PC-9 (cell line): ENCODE measurements at regions of chr12 and their contacts with region 1.

Region 1: DNA sequence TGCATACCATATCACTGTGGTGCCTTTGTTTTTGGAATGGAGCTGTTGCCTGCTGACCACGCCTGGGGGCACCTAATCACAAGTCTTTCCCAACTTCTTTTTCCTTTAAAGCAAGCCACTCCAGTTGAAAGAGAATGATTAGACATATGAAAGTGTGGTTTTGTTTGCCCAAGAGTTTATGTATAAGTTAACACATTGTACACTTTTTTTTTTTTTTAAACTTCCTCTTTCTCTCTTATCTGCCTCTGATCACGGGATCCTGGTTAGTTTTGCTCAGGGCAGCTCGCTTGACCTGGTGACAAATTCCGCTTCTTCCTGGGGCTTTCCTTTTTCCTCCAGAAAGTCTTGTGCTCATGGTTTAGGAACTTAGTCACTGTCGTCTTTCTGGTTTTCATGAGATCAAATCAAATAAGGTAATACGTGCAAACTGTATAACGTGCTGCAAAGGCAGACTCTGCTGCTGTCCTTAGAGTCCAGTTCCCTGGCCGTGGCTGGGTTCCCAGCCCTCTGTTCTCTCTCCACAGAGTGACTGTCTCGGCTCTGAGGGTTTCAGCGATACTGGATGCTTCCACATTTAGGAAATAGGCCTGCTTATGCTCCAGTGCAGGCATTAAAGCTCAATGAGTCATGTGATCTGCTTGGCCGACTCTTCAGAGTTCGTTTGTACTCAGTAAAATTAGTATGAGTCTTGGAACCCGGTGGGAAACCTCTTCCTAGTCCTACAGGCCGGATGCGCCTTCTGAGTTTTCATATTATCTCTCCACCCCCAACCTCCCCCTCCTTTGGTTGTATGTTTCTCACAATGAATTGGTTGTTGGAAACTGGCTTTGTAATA is 15.2 kb downstream of the RASSF3 start:
- DNase-seq: peak; percentile 72 to 99
- H3K4me3 ChIP-seq: peak overlapping the region; percentile 42
- H3K27ac ChIP-seq: peak overlapping the region; percentile 100
- H3K4me1 ChIP-seq: peaks cover 59% of the 10 kb centered on the region
- H3K27me3 ChIP-seq: no peaks in the 10 kb centered on the region
- CTCF ChIP-seq: no peak

Region 2: DNA sequence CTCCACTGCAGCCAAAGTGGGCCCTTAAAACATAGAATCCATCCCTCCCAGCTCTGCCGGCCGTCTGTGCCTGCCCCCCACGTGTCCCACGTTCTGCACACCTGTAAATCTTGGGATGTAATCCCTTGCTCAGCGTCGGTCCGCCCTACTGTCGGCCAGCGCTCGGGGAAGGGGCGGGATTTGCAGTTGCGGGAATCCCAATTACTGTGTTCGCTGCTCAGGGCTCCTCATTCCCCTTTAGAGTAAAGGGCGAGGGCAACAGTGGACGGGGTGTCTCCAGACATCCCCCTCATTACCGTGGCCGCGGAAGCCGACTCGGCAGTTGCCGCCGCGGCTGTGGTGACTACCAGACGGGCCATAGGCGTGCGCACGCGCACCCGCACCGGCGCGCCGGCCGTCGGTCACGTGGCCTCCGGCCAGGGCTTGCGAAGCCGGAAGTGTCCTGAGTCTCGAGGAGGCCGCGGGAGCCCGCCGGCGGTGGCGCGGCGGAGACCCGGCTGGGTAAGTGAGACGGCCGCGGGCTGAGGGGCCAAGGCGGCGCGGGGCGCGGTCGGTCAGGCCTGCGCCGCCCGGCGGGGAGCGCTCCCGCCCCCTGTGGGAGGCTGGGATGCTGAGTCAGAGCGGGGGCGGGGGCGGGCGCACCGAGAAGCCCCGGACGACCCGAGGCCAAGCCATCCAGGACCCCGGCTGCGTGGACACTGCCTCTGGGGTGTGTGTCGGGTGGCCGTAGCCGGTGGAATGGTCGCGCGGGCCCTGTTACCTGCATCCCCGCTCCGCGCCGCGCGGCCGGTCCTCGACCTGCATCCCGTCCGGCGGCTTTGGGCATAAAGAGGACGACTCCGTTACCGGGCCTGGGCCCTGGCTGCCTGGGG is 173.5 kb before region 1 on chr12 and contains the start of gene TBK1:
- CTCF ChIA-PET with region 1: no interaction called
- POLR2A ChIA-PET with region 1: interaction called, 13 read pairs
- intact Hi-C with region 1: no loop called
- DNase-seq: peak; percentile 74 to 90
- H3K4me3 ChIP-seq: peak within 1 kb of the TSS; percentile 69
- H3K27ac ChIP-seq: peak within 1 kb of the TSS; percentile 87
- H3K4me1 ChIP-seq: peaks cover 26% of the 10 kb centered on the region
- H3K27me3 ChIP-seq: no peaks in the 10 kb centered on the region
- CTCF ChIP-seq: no peak
- total RNA-seq, gene TBK1: 18.0 and 26.2 TPM in 2 replicates

Region 3: DNA sequence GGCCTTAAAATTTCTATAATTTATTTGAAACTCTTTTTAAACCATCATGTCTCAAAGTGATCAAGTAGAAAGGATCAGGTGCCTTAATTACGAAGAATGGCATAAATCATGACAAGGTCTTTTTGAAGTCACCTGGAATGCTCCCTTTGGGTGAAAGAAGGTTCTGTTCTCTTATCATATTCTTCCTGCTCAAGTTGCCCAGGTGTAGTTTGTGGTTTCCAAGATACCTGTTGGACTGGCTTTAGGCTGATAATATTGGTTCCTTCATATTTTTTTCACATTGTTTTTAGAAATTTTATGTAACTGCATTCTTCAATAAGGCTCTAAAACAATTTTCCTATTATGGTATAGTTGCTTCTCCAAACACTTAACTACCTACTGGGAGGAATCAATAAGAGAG is 14.0 kb after region 1 on chr12:
- CTCF ChIA-PET with region 1: no interaction called
- POLR2A ChIA-PET with region 1: interaction called, 4 read pairs
- intact Hi-C with region 1: loop called (anchors 1 kb)
- DNase-seq: peak; percentile 23 to 91
- H3K4me3 ChIP-seq: peak overlapping the region; percentile 10; the same call in 1 of the 2 replicates
- H3K27ac ChIP-seq: peak overlapping the region; percentile 92
- H3K4me1 ChIP-seq: peaks cover 50% of the 10 kb centered on the region
- H3K27me3 ChIP-seq: no peaks in the 10 kb centered on the region
- CTCF ChIP-seq: no peak

Region 4: DNA sequence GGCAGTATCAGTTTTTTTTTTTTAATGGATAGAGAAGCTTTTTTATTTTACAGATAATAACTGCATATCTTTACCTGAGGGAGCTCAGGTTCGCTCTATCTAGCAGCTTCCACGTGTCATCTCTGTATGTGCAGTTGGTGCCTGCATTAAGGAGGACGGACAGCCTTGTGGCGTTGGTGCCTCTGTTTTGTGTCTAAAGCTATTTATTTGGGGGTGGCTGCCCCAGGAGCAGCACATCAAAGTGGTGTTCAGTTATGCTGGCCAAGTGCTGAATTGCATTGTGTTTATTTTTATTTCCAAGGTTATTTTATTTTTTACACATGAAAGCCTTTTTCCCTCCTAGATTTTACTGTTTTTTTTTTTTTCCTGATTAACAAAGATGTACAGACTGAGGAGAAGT is 44.6 kb after region 1 on chr12:
- CTCF ChIA-PET with region 1: no interaction called
- POLR2A ChIA-PET with region 1: interaction called, 14 read pairs
- intact Hi-C with region 1: no loop called
- DNase-seq: no peak
- H3K4me3 ChIP-seq: no peak overlapping the region
- H3K27ac ChIP-seq: peak overlapping the region; percentile 87
- H3K4me1 ChIP-seq: peaks cover 89% of the 10 kb centered on the region
- H3K27me3 ChIP-seq: no peaks in the 10 kb centered on the region
- CTCF ChIP-seq: no peak

Region 5: GRCh38 chr12:64679487-64679983 is 54.1 kb after region 1 on chr12:
- CTCF ChIA-PET with region 1: interaction called, 3 read pairs
- POLR2A ChIA-PET with region 1: no interaction called
- intact Hi-C with region 1: loop called (anchors 2 kb)
- DNase-seq: peak; percentile 68 to 83
- H3K4me3 ChIP-seq: peak overlapping the region; percentile 45; the same call in 1 of the 2 replicates
- H3K27ac ChIP-seq: peak overlapping the region; percentile 91
- H3K4me1 ChIP-seq: peaks cover 59% of the 10 kb centered on the region
- H3K27me3 ChIP-seq: no peaks in the 10 kb centered on the region
- CTCF ChIP-seq: no peak